GM12878 (cell line): ENCODE measurements at regions of chr1 and their contacts with region 1.

Region 1: GRCh38 chr1:17922833-17923232 is 167.7 kb downstream of the ACTL8 start:
- DNase-seq: no peak
- ATAC-seq: no peak
- H3K4me3 ChIP-seq: no peak overlapping the region
- H3K27ac ChIP-seq: no peak overlapping the region
- H3K4me1 ChIP-seq: no peaks in the 10 kb centered on the region
- H3K27me3 ChIP-seq: no peaks in the 10 kb centered on the region
- CTCF ChIP-seq: peak; percentile 50 to 60 (median 52)
- EP300 ChIP-seq: no peak
- POLR2A ChIP-seq: no peak
- RAD21 ChIP-seq: peak; percentile 60

Region 2: DNA sequence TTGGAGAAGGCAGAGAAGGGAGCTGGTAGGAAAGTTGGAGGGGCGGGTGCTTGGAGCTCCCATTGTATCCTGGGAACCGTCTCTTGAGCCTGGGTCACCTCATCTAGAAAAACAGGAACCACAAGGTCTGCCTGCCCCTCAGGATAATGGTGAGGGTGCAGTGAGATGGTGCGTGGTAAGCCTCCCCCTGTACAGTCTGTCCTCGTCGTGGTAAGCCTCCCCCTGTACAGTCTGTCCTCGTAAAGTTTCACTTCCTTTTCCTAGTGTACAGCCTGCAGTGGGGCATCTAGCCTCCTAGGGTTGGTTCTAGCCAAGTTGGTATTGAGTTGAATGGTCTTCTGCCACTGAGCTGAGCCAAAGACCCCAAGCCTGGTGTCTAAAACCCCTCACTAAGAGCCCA is 118.3 kb after region 1 on chr1:
- CTCF ChIA-PET with region 1: no interaction called
- POLR2A ChIA-PET with region 1: no interaction called
- RAD21 ChIA-PET with region 1: no interaction called
- SMC1A ChIA-PET with region 1: no interaction called
- in situ Hi-C with region 1: no loop called
- intact Hi-C with region 1: no loop called
- DNase-seq: no peak
- ATAC-seq: peak; percentile 81
- H3K4me3 ChIP-seq: no peak overlapping the region
- H3K27ac ChIP-seq: no peak overlapping the region
- H3K4me1 ChIP-seq: no peaks in the 10 kb centered on the region
- H3K27me3 ChIP-seq: 0 out of 4 replicates have a peak, but pooled peaks cover 0 to 2% of the 10 kb centered on the region in 2 experiments
- CTCF ChIP-seq: no peak
- EP300 ChIP-seq: no peak
- POLR2A ChIP-seq: no peak
- RAD21 ChIP-seq: no peak

Region 3: GRCh38 chr1:18100491-18101063 is 177.7 kb after region 1 on chr1:
- CTCF ChIA-PET with region 1: interaction called, 8 read pairs
- POLR2A ChIA-PET with region 1: no interaction called
- RAD21 ChIA-PET with region 1: interaction called, 5 read pairs
- SMC1A ChIA-PET with region 1: interaction called, 6 read pairs
- in situ Hi-C with region 1: no loop called
- intact Hi-C with region 1: loop called (anchors 1 kb)
- DNase-seq: peak; percentile 5
- ATAC-seq: peak; percentile 48
- H3K4me3 ChIP-seq: no peak overlapping the region
- H3K27ac ChIP-seq: no peak overlapping the region
- H3K4me1 ChIP-seq: no peaks in the 10 kb centered on the region
- H3K27me3 ChIP-seq: peaks cover 0 to under 1% of the 10 kb centered on the region in 2 experiments; a peak in 2 of 4 replicates
- CTCF ChIP-seq: peak; percentile 72 to 85 (median 73)
- EP300 ChIP-seq: no peak
- POLR2A ChIP-seq: no peak
- RAD21 ChIP-seq: peak; percentile 56; the same call in 1 of the 2 replicates

Region 4: GRCh38 chr1:18217398-18218043 is 294.7 kb after region 1 on chr1:
- CTCF ChIA-PET with region 1: no interaction called
- POLR2A ChIA-PET with region 1: no interaction called
- RAD21 ChIA-PET with region 1: no interaction called
- SMC1A ChIA-PET with region 1: no interaction called
- in situ Hi-C with region 1: no loop called
- intact Hi-C with region 1: loop called (anchors 5 kb)
- DNase-seq: no peak
- ATAC-seq: peak; percentile 67
- H3K4me3 ChIP-seq: no peak overlapping the region
- H3K27ac ChIP-seq: no peak overlapping the region
- H3K4me1 ChIP-seq: no peaks in the 10 kb centered on the region
- H3K27me3 ChIP-seq: no peaks in the 10 kb centered on the region; a peak in 1 of 4 replicates
- CTCF ChIP-seq: peak; percentile 44 to 55 (median 48)
- EP300 ChIP-seq: no peak
- POLR2A ChIP-seq: no peak
- RAD21 ChIP-seq: peak; percentile 41; the same call in 1 of the 2 replicates

Region 5: DNA sequence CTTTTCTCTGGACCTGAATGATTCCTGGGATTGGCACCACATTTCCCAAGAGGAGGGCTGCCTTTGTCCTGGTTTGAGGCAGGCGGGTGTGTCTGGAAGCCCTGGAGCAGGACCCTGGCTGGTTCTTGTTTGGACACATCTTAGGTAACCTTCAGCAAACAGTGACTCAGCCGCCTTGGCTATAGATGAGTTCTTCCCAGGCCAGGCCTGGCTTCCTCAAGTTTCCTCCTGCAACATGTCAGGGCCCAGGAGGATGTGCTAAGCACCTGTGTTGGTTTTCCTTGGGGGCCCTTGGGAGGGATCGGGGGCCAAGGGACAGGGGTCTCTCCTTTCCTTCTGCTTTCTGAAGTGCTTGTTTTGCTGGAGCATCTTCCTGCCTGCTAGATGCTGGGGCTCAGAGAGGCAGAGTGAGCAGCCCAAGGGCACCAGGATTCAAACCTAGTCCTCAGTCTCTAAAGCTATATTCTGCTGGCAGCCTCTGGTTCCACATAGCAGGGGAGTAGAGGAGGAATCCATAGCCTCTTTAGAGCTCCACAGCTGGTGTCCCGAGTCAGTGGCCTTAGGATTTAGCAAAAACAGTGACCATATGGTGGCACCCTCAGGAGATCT is 746.1 kb after region 1 on chr1:
- CTCF ChIA-PET with region 1: no interaction called
- POLR2A ChIA-PET with region 1: no interaction called
- RAD21 ChIA-PET with region 1: no interaction called
- SMC1A ChIA-PET with region 1: no interaction called
- in situ Hi-C with region 1: no loop called
- intact Hi-C with region 1: no loop called
- DNase-seq: no peak
- ATAC-seq: no peak
- H3K4me3 ChIP-seq: no peak overlapping the region
- H3K27ac ChIP-seq: no peak overlapping the region
- H3K4me1 ChIP-seq: no peaks in the 10 kb centered on the region
- H3K27me3 ChIP-seq: peaks cover 2% of the 10 kb centered on the region in 2 experiments
- CTCF ChIP-seq: no peak
- EP300 ChIP-seq: no peak
- POLR2A ChIP-seq: no peak
- RAD21 ChIP-seq: no peak